ENCODE measurements at regions of chr1 and their contacts with region 1.

Region 1: GRCh38 chr1:115642168-115643072 is 650 bp downstream of the VANGL1 start:
- DNase-seq: peak; percentile 38 to 52
- ATAC-seq: peak; percentile 61 to 85 (median 72)
- H3K4me3 ChIP-seq: peak overlapping the region; percentile 80 to 98 (median 88)
- H3K27ac ChIP-seq: peak overlapping the region; percentile 45 to 91 (median 82)
- H3K4me1 ChIP-seq: peaks cover 0 to 38% (median 22%) of the 10 kb centered on the region in 9 donors
- H3K27me3 ChIP-seq: no peaks in the 10 kb centered on the region
- CTCF ChIP-seq: peak in 5 of 9 donors; percentile 15 to 48 (median 40)

Region 2: GRCh38 chr1:115694805-115695204 is 52.4 kb after region 1 on chr1:
- intact Hi-C with region 1: loop called in 2 of 10 experiments (anchors 10 kb)
- DNase-seq: no peak
- ATAC-seq: no peak
- H3K4me3 ChIP-seq: no peak overlapping the region
- H3K27ac ChIP-seq: no peak overlapping the region
- H3K4me1 ChIP-seq: peaks cover 0 to 13% (median 0%) of the 10 kb centered on the region in 9 donors
- H3K27me3 ChIP-seq: no peaks in the 10 kb centered on the region
- CTCF ChIP-seq: no peak